ENCODE measurements at regions of chr11 and their contacts with region 1.

Region 1: DNA sequence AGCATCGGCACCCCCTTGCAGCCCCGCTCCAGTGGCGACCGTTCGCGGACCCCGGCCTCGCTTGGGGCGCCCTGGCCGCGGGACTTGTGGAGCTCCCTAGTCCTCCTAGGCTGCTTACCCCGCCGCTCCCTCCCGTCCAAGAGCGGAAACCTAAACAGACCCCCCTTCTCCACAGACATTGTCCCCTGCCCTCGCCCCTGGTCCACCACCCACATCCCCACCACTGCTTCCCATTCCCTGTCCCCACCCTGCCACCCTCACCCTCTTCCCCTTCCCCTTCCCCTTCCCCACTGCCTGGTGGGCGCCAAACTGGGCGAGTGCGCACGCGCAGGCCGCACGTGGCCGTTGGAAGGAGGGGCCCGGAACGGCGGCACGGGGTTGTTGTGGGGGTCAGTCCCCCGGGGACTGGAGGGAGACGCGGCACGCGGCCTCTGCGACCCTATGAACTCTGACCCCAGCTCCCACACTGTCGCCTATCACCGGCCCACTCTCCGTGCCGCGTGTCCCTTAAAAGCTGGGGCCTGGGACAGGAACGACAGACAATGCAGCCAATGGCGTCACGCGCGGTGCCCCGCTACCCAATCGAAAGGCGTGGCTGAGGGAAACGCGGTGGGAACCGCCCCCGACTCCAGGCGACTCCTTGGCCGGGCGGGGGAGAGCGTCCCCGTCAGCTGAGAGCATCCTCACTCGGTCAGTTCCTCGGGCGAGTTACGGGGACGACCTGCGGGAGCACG is at the start of gene SNX32:
- DNase-seq: peak; percentile 96
- H3K4me3 Mint-ChIP-seq: no peak within 1 kb of the TSS
- H3K27ac Mint-ChIP-seq: no peak within 1 kb of the TSS
- H3K4me1 Mint-ChIP-seq: peaks cover 17% of the 10 kb centered on the region
- H3K27me3 Mint-ChIP-seq: peaks cover 25% of the 10 kb centered on the region
- total RNA-seq, gene SNX32: 2.1 to 2.2 TPM

Region 2: DNA sequence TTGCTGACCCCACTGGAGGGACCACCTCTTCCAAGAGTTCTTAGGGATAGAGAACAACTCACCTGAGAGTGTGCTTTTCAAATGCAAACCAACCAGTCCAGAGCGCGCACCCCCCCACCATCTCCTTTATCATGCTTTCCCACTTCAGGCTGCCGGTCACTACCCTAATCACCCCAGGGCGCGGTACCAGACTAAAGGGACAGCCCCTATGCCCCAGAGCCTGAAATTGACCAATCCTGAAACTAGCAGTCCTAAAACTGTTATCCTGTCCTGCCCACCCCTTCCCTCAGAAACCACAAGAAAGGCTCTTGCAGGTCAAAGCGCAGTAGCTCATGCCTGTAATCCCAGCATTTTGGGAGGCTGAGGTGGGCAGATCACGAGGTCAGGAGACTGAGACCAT is 373.9 kb before region 1 on chr11:
- CTCF ChIA-PET with region 1: no interaction called
- POLR2A ChIA-PET with region 1: interaction called, 18 read pairs
- DNase-seq: no peak
- H3K4me3 Mint-ChIP-seq: no peak overlapping the region
- H3K27ac Mint-ChIP-seq: no peak overlapping the region
- H3K4me1 Mint-ChIP-seq: peaks cover 21% of the 10 kb centered on the region
- H3K27me3 Mint-ChIP-seq: no peaks in the 10 kb centered on the region

Region 3: GRCh38 chr11:65802841-65803240 is 30.6 kb before region 1 on chr11:
- CTCF ChIA-PET with region 1: no interaction called
- POLR2A ChIA-PET with region 1: no interaction called
- DNase-seq: no peak
- H3K4me3 Mint-ChIP-seq: no peak overlapping the region
- H3K27ac Mint-ChIP-seq: no peak overlapping the region
- H3K4me1 Mint-ChIP-seq: peaks cover 5% of the 10 kb centered on the region
- H3K27me3 Mint-ChIP-seq: peaks cover 26% of the 10 kb centered on the region

Region 4: DNA sequence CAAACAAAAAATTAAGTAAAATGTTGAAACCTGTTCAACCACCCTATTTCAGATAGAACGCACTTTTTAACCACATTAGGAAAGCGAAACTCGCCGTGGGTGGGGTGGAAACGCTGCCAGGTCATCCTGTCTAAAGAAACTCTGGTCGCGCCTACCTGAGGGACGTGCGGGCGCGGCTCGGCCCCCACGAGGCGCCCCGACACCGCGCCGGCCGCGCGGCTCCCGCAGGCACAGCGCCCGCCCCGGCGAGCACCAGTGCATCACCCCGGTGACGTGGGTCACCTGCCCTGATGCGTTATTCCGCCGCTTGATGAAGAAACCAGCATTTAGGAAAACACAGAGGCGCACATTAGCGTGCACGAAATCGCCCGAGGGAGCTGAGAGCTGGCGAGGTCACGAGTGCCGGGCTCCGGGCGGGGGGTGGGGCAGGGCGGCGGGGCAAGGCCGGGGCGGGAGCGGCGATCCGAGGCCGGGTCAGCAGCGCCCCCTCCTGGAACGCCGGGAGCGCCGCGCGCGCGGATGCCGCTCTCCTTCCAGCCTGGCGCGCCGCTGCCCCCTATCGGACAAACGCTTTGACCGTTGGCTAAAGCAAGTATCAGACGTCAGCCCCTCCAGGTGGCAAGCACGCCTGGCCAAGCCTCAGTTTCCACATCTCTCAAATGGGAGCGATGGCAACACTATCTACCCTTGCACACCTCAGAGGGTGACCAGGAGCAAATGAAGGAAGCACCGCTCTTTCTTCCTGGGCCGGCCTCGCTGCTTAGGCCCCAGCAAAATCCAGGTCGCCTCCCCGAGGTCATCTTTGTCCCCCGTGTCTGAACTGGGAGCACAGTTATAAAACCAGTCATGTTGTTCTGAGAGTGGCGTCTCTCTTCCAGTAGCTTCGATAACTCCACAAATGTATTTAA is 15.4 kb before region 1 on chr11:
- CTCF ChIA-PET with region 1: interaction called, 31 read pairs
- POLR2A ChIA-PET with region 1: no interaction called
- DNase-seq: peak; percentile 93
- H3K4me3 Mint-ChIP-seq: peak overlapping the region; percentile 74
- H3K27ac Mint-ChIP-seq: peak overlapping the region; percentile 79
- H3K4me1 Mint-ChIP-seq: peaks cover 20% of the 10 kb centered on the region
- H3K27me3 Mint-ChIP-seq: peaks cover 4% of the 10 kb centered on the region

Region 5: GRCh38 chr11:65850831-65851811 is 17.7 kb after region 1 on chr11:
- CTCF ChIA-PET with region 1: interaction called, 12 read pairs
- POLR2A ChIA-PET with region 1: no interaction called
- DNase-seq: no peak
- H3K4me3 Mint-ChIP-seq: no peak overlapping the region
- H3K27ac Mint-ChIP-seq: peak overlapping the region; percentile 55
- H3K4me1 Mint-ChIP-seq: peaks cover 26% of the 10 kb centered on the region
- H3K27me3 Mint-ChIP-seq: no peaks in the 10 kb centered on the region

Region 6: GRCh38 chr11:65919146-65920033 is 85.9 kb after region 1 on chr11 and contains the start of gene DRAP1:
- CTCF ChIA-PET with region 1: no interaction called
- POLR2A ChIA-PET with region 1: no interaction called
- DNase-seq: peak; percentile 98
- H3K4me3 Mint-ChIP-seq: peak within 1 kb of the TSS; percentile 95
- H3K27ac Mint-ChIP-seq: peak within 1 kb of the TSS; percentile 90
- H3K4me1 Mint-ChIP-seq: peaks cover 53% of the 10 kb centered on the region
- H3K27me3 Mint-ChIP-seq: no peaks in the 10 kb centered on the region
- total RNA-seq, gene DRAP1: 190 to 218 TPM

Measured in activated CD4-positive, alpha-beta T cell treated with anti-CD3 and anti-CD28 coated beads, Interleukin-2, amount 10 ng/mL, durations not matched to agents 7 days and 5 days (primary cell).